ENCODE measurements at regions of chr17 and their contacts with region 1.

Region 1: DNA sequence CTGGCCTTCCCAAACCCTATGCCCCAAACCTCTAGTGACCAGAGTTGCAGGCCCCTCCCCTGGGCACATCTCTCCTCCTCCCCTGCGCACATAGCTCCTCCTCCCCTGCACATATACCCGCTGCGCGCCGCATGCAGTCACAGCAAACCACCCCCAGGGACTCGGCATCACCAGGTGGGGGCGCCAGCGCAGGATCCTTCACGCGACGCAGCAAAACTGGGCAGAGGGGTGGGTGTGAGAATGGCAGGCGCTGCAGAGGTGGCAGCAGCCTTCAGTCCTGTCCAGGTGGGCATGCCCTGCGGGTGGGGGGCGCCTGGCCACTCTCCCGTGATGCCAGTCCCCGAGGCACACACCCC is 5.6 kb downstream of the CORO6 start:
- DNase-seq: no peak
- ATAC-seq: peak; percentile 82
- H3K4me3 ChIP-seq: peak overlapping the region; percentile 67; the same call in 1 of the 2 replicates
- H3K27ac ChIP-seq: no peak overlapping the region; the same call in 1 of the 2 replicates
- H3K4me1 ChIP-seq: peaks cover 38% of the 10 kb centered on the region
- H3K27me3 ChIP-seq: peaks cover 4 to 6% of the 10 kb centered on the region in 2 experiments; a peak in 3 of 4 replicates
- CTCF ChIP-seq: peak; percentile 76 to 94 (median 93)
- EP300 ChIP-seq: no peak
- POLR2A ChIP-seq: peak; percentile 70
- RAD21 ChIP-seq: peak; percentile 47

Region 2: DNA sequence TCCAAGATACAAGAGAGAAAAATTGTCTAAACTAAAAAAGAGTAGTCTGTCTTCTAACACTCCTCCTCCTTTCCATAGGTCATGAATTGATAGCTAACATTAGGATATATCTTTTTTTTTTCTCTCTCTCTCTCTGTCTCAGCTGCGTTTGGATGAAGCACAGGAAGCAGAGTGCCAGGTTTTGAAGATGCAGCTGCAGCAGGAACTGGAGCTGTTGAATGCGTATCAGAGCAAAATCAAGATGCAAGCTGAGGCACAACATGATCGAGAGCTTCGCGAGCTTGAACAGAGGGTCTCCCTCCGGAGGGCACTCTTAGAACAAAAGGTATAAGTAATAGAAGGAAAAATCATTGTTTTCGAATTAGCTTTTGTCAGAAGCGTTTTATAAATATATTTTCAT is 83.1 kb before region 1 on chr17:
- CTCF ChIA-PET with region 1: interaction called, 4 read pairs
- POLR2A ChIA-PET with region 1: no interaction called
- RAD21 ChIA-PET with region 1: interaction called, 3 read pairs
- SMC1A ChIA-PET with region 1: no interaction called
- in situ Hi-C with region 1: no loop called
- intact Hi-C with region 1: loop called (anchors 10 kb)
- DNase-seq: no peak
- ATAC-seq: no peak
- H3K4me3 ChIP-seq: no peak overlapping the region
- H3K27ac ChIP-seq: no peak overlapping the region
- H3K4me1 ChIP-seq: no peaks in the 10 kb centered on the region
- H3K27me3 ChIP-seq: no peaks in the 10 kb centered on the region
- CTCF ChIP-seq: no peak
- EP300 ChIP-seq: no peak
- POLR2A ChIP-seq: no peak
- RAD21 ChIP-seq: no peak

Region 3: DNA sequence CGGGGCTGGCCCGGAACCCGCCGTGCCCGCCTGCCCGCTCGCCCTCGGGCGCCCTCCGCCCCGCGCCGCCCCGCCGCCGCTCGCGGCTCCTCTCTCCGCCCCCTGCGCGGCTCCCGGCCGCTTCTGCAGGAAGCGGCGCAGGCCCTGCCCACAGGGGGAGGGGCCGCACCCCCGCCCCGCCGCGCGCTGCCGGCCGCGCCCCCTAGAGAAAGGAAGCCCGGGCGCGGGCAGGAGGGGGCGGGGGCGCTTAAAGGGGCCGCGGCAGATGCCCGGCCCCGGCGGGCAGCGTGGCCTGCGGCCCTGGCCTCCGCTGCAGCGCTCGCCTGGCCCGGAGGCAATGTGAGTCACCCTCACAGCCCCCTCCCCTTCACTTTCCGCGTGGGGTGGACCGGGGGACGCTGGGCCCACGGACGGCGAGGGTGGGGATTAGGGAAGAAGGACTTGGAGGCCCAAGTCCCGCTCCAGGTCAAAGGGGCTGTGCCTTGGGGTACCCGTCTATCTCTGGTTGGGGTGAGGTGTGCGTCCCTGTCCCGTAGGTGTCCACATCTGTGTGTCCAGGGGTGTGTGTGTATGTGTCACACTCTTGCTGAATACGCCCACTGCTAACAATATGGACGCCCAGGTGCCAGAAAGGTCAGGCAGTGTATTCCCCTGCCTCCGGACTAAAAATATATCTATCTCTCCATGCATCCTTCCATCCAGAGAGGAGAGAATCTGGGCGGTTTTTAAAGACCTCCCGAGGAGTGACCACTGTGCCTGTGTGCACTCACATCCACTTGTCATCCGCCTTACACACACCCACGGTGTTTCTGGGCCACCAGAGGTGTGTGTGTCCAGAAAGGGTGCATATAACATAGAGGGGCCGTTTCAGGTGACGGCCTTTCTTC is 27.3 kb before region 1 on chr17 and contains the start of gene GIT1:
- CTCF ChIA-PET with region 1: interaction called, 82 read pairs
- POLR2A ChIA-PET with region 1: interaction called, 9 read pairs
- RAD21 ChIA-PET with region 1: interaction called, 20 read pairs
- SMC1A ChIA-PET with region 1: interaction called, 17 read pairs
- in situ Hi-C with region 1: no loop called
- intact Hi-C with region 1: no loop called
- DNase-seq: no peak
- ATAC-seq: peak; percentile 74
- H3K4me3 ChIP-seq: peak within 1 kb of the TSS; percentile 94
- H3K27ac ChIP-seq: peak within 1 kb of the TSS; percentile 72
- H3K4me1 ChIP-seq: peaks cover 52% of the 10 kb centered on the region
- H3K27me3 ChIP-seq: no peaks in the 10 kb centered on the region; a peak in 1 of 4 replicates
- CTCF ChIP-seq: no peak
- EP300 ChIP-seq: no peak
- POLR2A ChIP-seq: peak; percentile 63; the same call in 1 of the 2 replicates
- RAD21 ChIP-seq: no peak
- polyA plus RNA-seq, gene GIT1: 0.24 to 0.58 TPM

Region 4: GRCh38 chr17:29664743-29665480 is 47.8 kb after region 1 on chr17:
- CTCF ChIA-PET with region 1: interaction called, 11 read pairs
- POLR2A ChIA-PET with region 1: interaction called, 3 read pairs
- RAD21 ChIA-PET with region 1: interaction called, 4 read pairs
- SMC1A ChIA-PET with region 1: interaction called, 3 read pairs
- in situ Hi-C with region 1: no loop called
- intact Hi-C with region 1: loop called (anchors 5 kb)
- DNase-seq: no peak
- ATAC-seq: peak; percentile 60
- H3K4me3 ChIP-seq: no peak overlapping the region
- H3K27ac ChIP-seq: peak overlapping the region; percentile 4
- H3K4me1 ChIP-seq: peaks cover 8% of the 10 kb centered on the region
- H3K27me3 ChIP-seq: no peaks in the 10 kb centered on the region
- CTCF ChIP-seq: no peak
- EP300 ChIP-seq: no peak
- POLR2A ChIP-seq: no peak
- RAD21 ChIP-seq: no peak

Region 5: DNA sequence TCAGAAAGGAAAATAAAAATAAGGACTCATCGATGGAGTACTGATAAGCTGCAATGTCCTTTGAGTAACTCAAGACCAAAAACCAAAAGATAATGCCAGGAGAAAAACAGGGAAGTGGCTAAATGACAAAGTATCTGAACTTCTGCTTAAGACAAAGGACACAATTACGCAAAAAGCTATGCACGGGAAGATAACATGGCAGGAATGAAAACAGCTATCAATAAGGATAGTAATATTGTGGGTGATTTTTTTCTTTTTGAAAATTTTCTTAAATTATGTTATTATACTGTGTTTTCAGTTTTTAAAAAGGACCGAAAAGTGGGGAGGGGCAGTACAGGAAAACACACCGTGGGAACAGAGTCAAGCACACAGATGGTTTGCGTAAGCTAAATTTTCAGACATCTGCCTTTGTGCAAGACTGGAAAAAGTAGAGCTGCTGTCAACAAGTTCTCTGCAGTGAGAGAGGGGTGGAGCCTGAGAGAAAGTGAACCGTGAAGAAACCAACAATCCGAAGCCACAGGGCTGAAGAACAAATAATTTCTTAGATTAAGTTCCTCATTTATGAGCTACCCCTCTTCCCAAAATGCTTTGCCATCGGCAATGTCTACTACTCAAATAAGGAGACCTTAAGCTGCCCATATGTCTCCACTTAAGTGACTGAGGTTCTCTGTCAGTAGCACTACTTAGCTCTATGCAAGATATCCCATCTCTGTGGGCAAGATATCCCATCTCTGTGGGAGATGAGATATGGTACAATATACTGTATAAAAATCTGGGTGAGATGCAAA is 105.5 kb after region 1 on chr17:
- CTCF ChIA-PET with region 1: interaction called, 17 read pairs
- POLR2A ChIA-PET with region 1: no interaction called
- RAD21 ChIA-PET with region 1: interaction called, 19 read pairs
- SMC1A ChIA-PET with region 1: interaction called, 5 read pairs
- in situ Hi-C with region 1: no loop called
- intact Hi-C with region 1: no loop called
- DNase-seq: peak; percentile 96
- ATAC-seq: peak; percentile 86
- H3K4me3 ChIP-seq: peak overlapping the region; percentile 53; the same call in 1 of the 2 replicates
- H3K27ac ChIP-seq: peak overlapping the region; percentile 94
- H3K4me1 ChIP-seq: peaks cover 62% of the 10 kb centered on the region
- H3K27me3 ChIP-seq: no peaks in the 10 kb centered on the region
- CTCF ChIP-seq: no peak
- EP300 ChIP-seq: peak; percentile 33 to 67; a peak in 3 of 4 replicates
- POLR2A ChIP-seq: peak; percentile 65
- RAD21 ChIP-seq: no peak; the same call in 1 of the 2 replicates

Region 6: GRCh38 chr17:29777663-29778062 is 160.6 kb after region 1 on chr17:
- CTCF ChIA-PET with region 1: interaction called, 114 read pairs
- POLR2A ChIA-PET with region 1: no interaction called
- RAD21 ChIA-PET with region 1: interaction called, 65 read pairs
- SMC1A ChIA-PET with region 1: interaction called, 17 read pairs
- in situ Hi-C with region 1: no loop called
- intact Hi-C with region 1: no loop called
- DNase-seq: no peak
- ATAC-seq: no peak
- H3K4me3 ChIP-seq: no peak overlapping the region
- H3K27ac ChIP-seq: no peak overlapping the region
- H3K4me1 ChIP-seq: no peaks in the 10 kb centered on the region
- H3K27me3 ChIP-seq: no peaks in the 10 kb centered on the region
- CTCF ChIP-seq: no peak
- EP300 ChIP-seq: no peak
- POLR2A ChIP-seq: no peak
- RAD21 ChIP-seq: no peak

Measured in GM12878 (cell line).